Activated CD4-positive, alpha-beta T cell treated with anti-CD3 and anti-CD28 coated beads, Interleukin-2, amount 10 ng/mL, durations not matched to agents 24 days and 14 days (primary cell): ENCODE measurements at regions of chr19 and their contacts with region 1.

Region 1: DNA sequence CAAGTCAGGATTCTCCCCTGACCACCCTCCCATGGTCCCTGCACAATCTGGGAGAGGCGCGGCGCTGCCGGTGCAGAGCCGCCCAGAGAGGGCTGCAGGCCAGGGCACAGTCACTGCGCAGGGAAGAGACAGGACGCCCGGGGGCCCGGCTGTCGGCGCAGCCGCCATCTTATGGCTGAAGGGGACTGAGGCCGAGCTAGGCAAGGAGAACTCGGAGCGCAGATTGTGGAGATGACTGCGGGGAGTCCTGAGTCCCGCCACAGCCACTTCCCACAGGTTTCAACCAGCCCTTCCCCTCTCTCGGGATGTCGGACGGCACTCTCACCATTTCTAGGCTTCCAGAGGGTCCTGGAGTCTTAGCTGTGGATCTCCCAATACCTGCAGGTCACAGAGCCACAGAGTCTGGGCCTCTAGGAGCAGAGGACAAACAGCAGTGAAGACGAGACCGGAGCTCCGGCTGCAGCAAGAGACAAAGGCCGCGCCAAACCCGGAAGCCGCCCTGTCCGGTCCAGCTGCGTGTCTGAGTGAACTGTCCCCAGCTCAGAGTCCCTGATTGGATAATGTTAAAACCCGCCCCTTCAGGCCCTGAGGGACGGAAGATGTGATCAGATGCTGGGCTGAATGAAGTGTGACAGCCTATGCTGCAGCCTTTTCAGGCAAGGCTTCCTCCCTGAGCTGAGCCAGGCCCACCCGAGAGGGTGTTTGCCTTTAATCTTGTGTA is at the start of gene ZNF708:
- DNase-seq: peak; percentile 94
- H3K4me3 Mint-ChIP-seq: peak within 1 kb of the TSS; percentile 94
- H3K27ac Mint-ChIP-seq: peak within 1 kb of the TSS; percentile 100
- H3K4me1 Mint-ChIP-seq: peaks cover 17% of the 10 kb centered on the region
- H3K27me3 Mint-ChIP-seq: no peaks in the 10 kb centered on the region
- total RNA-seq, gene ZNF708: 10.1 TPM in 2 replicates

Region 2: DNA sequence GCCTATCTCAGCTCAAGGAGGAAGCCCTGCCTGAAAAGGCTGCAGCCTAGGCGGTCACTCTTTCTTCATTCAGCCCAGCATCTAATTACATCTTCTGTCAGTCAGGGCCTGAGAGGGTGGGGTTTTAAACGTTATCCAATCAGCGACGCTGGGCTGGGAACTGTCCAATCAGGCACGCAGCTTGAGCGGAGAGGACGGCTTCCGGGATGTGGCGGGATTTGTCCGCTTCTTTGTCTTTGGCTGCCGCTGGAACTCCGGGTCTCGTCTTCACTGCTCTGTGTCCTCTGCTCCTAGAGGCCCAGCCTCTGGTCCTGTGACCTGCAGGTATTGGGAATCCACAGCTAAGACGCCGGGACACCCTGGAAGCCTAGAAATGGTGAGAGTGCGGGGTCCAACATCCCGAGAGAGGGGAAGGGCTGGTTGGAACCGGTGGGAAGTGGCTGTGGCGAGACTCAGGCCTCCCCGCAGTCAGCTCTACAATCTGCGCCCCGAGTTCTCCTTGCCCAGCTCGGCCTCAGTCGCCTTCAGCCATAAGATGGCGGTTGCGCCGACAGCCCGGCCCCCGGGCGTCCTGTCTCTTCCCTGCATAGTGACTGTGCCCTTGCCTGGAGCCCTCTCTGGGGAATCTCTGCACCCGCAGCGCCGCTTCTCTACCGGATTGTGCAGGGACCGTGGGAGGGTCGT is 29.9 kb after region 1 on chr19 and contains the start of gene ZNF738:
- intact Hi-C with region 1: loop called (anchors 1 kb)
- DNase-seq: peak; percentile 94
- H3K4me3 Mint-ChIP-seq: peak within 1 kb of the TSS; percentile 98
- H3K27ac Mint-ChIP-seq: peak within 1 kb of the TSS; percentile 95
- H3K4me1 Mint-ChIP-seq: peaks cover 12% of the 10 kb centered on the region
- H3K27me3 Mint-ChIP-seq: no peaks in the 10 kb centered on the region
- total RNA-seq, gene ZNF738: 11.5 and 11.8 TPM in 2 replicates

Region 3: GRCh38 chr19:21423057-21424041 is 94.3 kb after region 1 on chr19:
- intact Hi-C with region 1: no loop called
- DNase-seq: no peak
- H3K4me3 Mint-ChIP-seq: no peak overlapping the region
- H3K27ac Mint-ChIP-seq: no peak overlapping the region
- H3K4me1 Mint-ChIP-seq: no peaks in the 10 kb centered on the region
- H3K27me3 Mint-ChIP-seq: no peaks in the 10 kb centered on the region